ENCODE measurements at regions of chr11 and their contacts with region 1.

Region 1: GRCh38 chr11:65540297-65541092 is 15.6 kb downstream of the SCYL1 start:
- DNase-seq: peak; percentile 93 to 97
- ATAC-seq: peak; percentile 95
- H3K4me3 ChIP-seq: no peak overlapping the region
- H3K27ac ChIP-seq: peak overlapping the region in 1 of 2 donors; percentile 85
- H3K4me1 ChIP-seq: no peaks in the 10 kb centered on the region
- H3K27me3 ChIP-seq: no peaks in the 10 kb centered on the region

Region 2: DNA sequence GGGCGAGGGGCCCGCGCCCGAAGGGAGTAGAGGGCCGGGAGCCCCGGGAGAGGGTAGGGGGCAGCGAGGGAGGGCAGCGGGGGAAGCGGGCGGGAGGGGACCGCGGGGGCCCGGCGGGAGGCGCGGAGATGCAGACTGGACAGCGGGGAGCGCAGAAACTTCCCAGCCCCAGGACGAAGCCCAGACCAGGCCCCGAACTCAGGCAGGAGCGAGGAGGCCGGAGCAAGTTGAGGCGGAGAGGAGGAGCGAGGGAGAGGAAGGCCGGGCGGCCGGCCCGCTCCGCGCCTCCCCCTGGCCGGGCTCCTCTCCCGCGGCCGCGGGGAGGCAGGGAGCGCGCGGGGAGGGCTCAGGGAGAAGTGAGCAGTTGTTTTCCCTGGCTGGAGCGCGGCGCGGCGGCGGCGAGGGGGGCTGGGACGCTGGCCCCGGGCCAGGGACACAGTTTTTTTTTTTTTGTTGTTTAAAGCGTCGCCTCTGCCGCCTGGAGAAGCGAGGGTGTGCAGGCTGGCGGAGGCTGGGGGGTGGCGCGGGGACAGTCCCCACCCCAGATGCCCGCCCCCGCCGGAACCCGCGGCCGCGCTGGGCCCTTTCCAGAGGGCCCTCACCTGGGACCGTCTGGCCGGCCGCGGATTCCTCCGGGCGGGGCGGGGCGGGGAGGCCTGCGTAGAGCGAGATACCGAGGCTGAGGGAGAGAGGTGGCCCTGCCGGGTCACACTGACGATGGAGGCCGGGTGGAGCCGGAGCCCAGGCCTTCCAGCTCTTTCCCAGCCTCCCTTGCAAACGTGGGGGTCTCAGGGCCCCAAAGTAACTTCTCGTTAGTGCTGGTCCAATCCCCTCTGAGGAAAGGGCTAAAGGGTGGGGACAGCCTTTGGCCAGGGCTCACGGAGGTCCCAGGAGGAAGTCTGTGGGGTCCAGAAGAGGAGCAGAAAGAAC is 17.8 kb after region 1 on chr11 and contains the start of gene LTBP3:
- intact Hi-C with region 1: loop called in 1 of 2 experiments (anchors 2 kb)
- DNase-seq: peak; percentile 91 to 94
- ATAC-seq: peak; percentile 89
- H3K4me3 ChIP-seq: peak within 1 kb of the TSS; percentile 64 to 87
- H3K27ac ChIP-seq: peak within 1 kb of the TSS; percentile 73 to 94
- H3K4me1 ChIP-seq: no peaks in the 10 kb centered on the region
- H3K27me3 ChIP-seq: no peaks in the 10 kb centered on the region
- total RNA-seq, gene LTBP3: 280 to 473 TPM

Region 3: DNA sequence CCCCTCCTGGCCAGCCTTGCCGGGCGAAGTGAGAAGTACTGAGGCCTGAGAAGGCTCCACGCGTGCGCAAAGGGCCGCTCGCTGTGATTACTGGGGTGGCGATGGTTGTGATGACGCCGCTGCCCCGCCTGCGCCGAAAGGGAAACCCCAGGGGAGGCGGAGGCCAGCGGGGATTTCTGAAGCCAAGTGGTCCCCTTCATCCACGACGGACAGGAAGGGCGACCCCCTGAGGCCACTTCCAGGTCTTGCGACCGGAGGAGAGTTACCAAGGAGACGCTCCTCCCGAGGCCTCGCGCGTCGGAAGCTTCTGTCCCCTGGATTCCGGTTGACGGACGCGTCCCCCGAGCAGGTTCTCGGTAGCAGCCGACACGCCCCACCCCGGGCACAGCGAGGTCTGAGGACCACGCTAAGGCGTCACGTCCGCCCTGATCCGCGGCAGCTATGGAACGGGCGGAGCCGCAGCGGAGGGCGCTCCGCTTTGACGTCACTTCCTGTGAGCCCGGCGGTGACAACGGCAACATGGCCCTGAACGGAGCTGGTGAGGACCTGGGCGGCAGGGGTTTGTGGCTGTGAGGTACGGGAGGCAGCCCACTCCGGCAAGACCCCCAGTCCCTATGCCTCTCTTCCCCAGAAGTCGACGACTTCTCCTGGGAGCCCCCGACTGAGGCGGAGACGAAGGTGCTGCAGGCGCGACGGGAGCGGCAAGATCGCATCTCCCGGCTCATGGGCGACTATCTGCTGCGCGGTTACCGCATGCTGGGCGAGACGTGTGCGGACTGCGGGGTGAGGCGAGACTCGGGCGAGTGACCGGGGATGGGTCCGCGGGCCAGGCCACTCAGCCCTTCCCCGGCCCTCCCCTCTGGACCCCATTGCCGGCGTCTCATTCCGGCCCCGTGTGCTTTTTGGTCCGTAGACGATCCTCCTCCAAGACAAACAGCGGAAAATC is 29.8 kb after region 1 on chr11 and contains the start of gene ZNRD2:
- intact Hi-C with region 1: loop called in 1 of 2 experiments (anchors 1 kb)
- DNase-seq: peak; percentile 99
- ATAC-seq: peak; percentile 90
- H3K4me3 ChIP-seq: peak within 1 kb of the TSS; percentile 69 to 84
- H3K27ac ChIP-seq: peak within 1 kb of the TSS; percentile 20 to 87
- H3K4me1 ChIP-seq: no peaks in the 10 kb centered on the region
- H3K27me3 ChIP-seq: no peaks in the 10 kb centered on the region
- total RNA-seq, gene ZNRD2: 21.7 to 29.3 TPM

Region 4: DNA sequence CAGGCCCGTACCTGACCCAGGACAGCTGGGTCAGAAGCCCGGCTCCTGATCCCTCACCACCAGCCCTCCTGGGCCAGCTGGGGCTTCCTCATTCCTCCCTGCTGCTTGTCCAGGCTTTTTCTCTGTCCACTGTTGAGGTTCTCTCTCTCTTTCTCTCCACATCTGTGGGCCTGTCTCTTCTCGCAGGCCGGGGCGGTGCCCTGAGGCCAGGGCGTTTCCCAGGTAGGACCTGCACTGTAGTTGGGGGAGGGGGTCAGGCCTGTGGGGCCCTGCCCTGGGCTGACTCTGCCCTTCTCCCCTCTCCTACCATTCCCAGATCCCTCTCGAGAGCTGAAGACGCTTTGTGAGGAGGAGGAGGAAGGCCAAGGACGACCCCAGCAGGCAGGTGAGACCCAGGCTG is 40.2 kb after region 1 on chr11:
- intact Hi-C with region 1: no loop called
- DNase-seq: no peak
- ATAC-seq: no peak
- H3K4me3 ChIP-seq: no peak overlapping the region
- H3K27ac ChIP-seq: no peak overlapping the region
- H3K4me1 ChIP-seq: no peaks in the 10 kb centered on the region
- H3K27me3 ChIP-seq: no peaks in the 10 kb centered on the region

Region 5: DNA sequence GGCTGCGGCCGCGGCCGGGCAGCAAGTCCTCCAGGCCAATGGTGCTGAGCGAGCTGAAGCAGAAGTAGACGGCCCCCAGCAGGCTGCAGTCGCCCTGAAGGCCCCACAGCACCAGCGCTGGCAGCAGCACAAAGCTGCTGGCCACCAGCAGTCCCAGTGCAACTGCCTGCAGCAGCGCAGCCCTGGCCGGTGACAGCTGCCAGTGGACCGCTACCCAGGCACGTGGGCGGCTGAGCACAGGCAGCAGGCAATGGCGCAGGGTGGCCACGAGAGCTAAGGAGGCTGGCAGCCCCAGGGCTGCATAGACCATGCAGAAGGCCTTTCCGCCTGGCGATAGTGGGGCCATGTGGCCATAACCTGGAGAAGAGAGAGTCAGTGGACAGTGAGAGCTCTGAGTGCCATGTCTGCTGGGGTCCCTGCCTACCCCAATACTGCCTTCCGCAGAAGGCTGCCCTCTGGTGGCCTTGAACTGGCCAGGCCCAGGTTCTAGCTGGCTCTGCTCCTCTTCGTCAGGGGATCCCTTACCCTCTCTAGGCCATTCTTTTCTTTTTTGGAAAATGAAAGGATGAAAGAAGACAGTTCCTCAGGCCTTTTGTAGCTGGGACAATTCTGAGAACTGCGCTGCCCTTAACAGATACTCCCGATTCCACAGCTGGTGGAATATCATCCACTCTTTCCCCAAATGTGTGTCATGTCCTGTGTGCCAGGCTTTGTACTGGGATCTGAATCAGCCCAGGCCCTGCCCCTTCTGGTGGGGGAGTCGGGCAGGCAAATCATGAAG is 53.2 kb after region 1 on chr11:
- intact Hi-C with region 1: loop called in 1 of 2 experiments (anchors 5 kb)
- DNase-seq: peak; percentile 75 to 83
- ATAC-seq: peak; percentile 62
- H3K4me3 ChIP-seq: no peak overlapping the region
- H3K27ac ChIP-seq: no peak overlapping the region
- H3K4me1 ChIP-seq: no peaks in the 10 kb centered on the region
- H3K27me3 ChIP-seq: no peaks in the 10 kb centered on the region

Region 6: GRCh38 chr11:65615229-65615941 is 74.9 kb after region 1 on chr11 and contains the start of gene PCNX3:
- intact Hi-C with region 1: loop called in 1 of 2 experiments (anchors 5 kb)
- DNase-seq: peak; percentile 100
- ATAC-seq: peak; percentile 92
- H3K4me3 ChIP-seq: peak within 1 kb of the TSS; percentile 81 to 82
- H3K27ac ChIP-seq: peak within 1 kb of the TSS in 1 of 2 donors; percentile 85
- H3K4me1 ChIP-seq: peaks cover 0 to 2% of the 10 kb centered on the region in 2 donors
- H3K27me3 ChIP-seq: no peaks in the 10 kb centered on the region
- total RNA-seq, gene PCNX3: 24.8 to 28.8 TPM

Measured in aorta (tissue), 5 donors.